ENCODE measurements at regions of chr14 and their contacts with region 1.

Region 1: GRCh38 chr14:64764641-64765520 is 60.7 kb downstream of the PLEKHG3 start:
- DNase-seq: peak; percentile 61 to 86
- H3K4me3 ChIP-seq: peak overlapping the region in 2 of 4 experiments; percentile 2 to 27; a peak in 2 of 8 replicates
- H3K27ac ChIP-seq: no peak overlapping the region
- H3K4me1 ChIP-seq: peaks cover 4 to 34% (median 24%) of the 10 kb centered on the region in 4 experiments
- H3K27me3 ChIP-seq: peaks cover 0 to 2% (median 0%) of the 10 kb centered on the region in 4 experiments; a peak in 3 of 7 replicates
- CTCF ChIP-seq: peak in 2 of 3 experiments; percentile 89 to 90; a peak in 3 of 4 replicates
- EP300 ChIP-seq: no peak
- POLR2A ChIP-seq: no peak
- RAD21 ChIP-seq: peak; percentile 82 to 84

Region 2: DNA sequence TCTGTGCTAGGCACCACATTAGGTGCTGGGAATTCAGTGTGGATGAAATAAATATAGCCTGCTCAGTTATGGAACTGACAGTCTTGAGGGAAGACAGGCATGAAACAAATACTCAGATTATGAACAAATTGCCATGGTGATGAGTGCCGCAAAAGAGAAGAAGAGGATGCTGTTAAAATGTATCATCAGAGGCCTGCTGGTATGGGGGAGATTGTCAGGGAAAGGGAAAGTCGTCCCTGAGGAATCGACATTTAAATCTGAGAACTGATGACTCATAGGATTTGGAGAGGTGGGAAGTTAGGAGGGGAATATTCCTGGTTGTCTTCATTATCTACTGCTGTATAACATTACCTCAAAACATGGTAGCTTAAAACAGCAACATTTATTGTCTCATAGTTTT is 173.1 kb before region 1 on chr14:
- CTCF ChIA-PET with region 1: no interaction called
- POLR2A ChIA-PET with region 1: no interaction called
- DNase-seq: no peak
- H3K4me3 ChIP-seq: no peak overlapping the region
- H3K27ac ChIP-seq: no peak overlapping the region
- H3K4me1 ChIP-seq: no peaks in the 10 kb centered on the region; a peak in 1 of 7 replicates
- H3K27me3 ChIP-seq: no peaks in the 10 kb centered on the region
- CTCF ChIP-seq: no peak
- EP300 ChIP-seq: no peak
- POLR2A ChIP-seq: no peak
- RAD21 ChIP-seq: no peak

Region 3: GRCh38 chr14:64720131-64720576 is 44.7 kb before region 1 on chr14:
- CTCF ChIA-PET with region 1: interaction called, 30 read pairs
- POLR2A ChIA-PET with region 1: interaction called, 5 read pairs
- DNase-seq: no peak
- H3K4me3 ChIP-seq: no peak overlapping the region
- H3K27ac ChIP-seq: no peak overlapping the region
- H3K4me1 ChIP-seq: peaks cover 55 to 77% (median 63%) of the 10 kb centered on the region in 4 experiments
- H3K27me3 ChIP-seq: 0 out of 7 replicates have a peak, but pooled peaks cover 0 to 3% (median 0%) of the 10 kb centered on the region in 4 experiments
- CTCF ChIP-seq: no peak
- EP300 ChIP-seq: no peak
- POLR2A ChIP-seq: no peak
- RAD21 ChIP-seq: no peak

Region 4: GRCh38 chr14:64726585-64726890 is 38.3 kb before region 1 on chr14:
- CTCF ChIA-PET with region 1: interaction called, 30 read pairs
- POLR2A ChIA-PET with region 1: interaction called, 3 read pairs
- DNase-seq: no peak
- H3K4me3 ChIP-seq: peak overlapping the region in 1 of 4 experiments; percentile 7; a peak in 1 of 8 replicates
- H3K27ac ChIP-seq: no peak overlapping the region
- H3K4me1 ChIP-seq: peaks cover 24 to 44% (median 38%) of the 10 kb centered on the region in 4 experiments
- H3K27me3 ChIP-seq: no peaks in the 10 kb centered on the region
- CTCF ChIP-seq: no peak
- EP300 ChIP-seq: no peak
- POLR2A ChIP-seq: no peak
- RAD21 ChIP-seq: no peak

Region 5: GRCh38 chr14:64736271-64737122 is 28.4 kb before region 1 on chr14:
- CTCF ChIA-PET with region 1: interaction called, 18 read pairs
- POLR2A ChIA-PET with region 1: no interaction called
- DNase-seq: peak in 1 of 2 experiments; percentile 62
- H3K4me3 ChIP-seq: no peak overlapping the region
- H3K27ac ChIP-seq: no peak overlapping the region
- H3K4me1 ChIP-seq: peaks cover 0 to 13% (median 6%) of the 10 kb centered on the region in 4 experiments; a peak in 6 of 7 replicates
- H3K27me3 ChIP-seq: no peaks in the 10 kb centered on the region
- CTCF ChIP-seq: peak; percentile 59 to 66 (median 63)
- EP300 ChIP-seq: no peak
- POLR2A ChIP-seq: no peak
- RAD21 ChIP-seq: peak; percentile 38 to 60; a peak in 3 of 4 replicates

Region 6: GRCh38 chr14:64745511-64746091 is 19.3 kb before region 1 on chr14:
- CTCF ChIA-PET with region 1: interaction called, 11 read pairs
- POLR2A ChIA-PET with region 1: interaction called, 3 read pairs
- DNase-seq: no peak
- H3K4me3 ChIP-seq: no peak overlapping the region
- H3K27ac ChIP-seq: no peak overlapping the region
- H3K4me1 ChIP-seq: no peaks in the 10 kb centered on the region
- H3K27me3 ChIP-seq: no peaks in the 10 kb centered on the region
- CTCF ChIP-seq: peak in 1 of 3 experiments; percentile 25; a peak in 1 of 4 replicates
- EP300 ChIP-seq: no peak
- POLR2A ChIP-seq: no peak
- RAD21 ChIP-seq: peak; percentile 32 to 49; a peak in 2 of 4 replicates

Region 7: DNA sequence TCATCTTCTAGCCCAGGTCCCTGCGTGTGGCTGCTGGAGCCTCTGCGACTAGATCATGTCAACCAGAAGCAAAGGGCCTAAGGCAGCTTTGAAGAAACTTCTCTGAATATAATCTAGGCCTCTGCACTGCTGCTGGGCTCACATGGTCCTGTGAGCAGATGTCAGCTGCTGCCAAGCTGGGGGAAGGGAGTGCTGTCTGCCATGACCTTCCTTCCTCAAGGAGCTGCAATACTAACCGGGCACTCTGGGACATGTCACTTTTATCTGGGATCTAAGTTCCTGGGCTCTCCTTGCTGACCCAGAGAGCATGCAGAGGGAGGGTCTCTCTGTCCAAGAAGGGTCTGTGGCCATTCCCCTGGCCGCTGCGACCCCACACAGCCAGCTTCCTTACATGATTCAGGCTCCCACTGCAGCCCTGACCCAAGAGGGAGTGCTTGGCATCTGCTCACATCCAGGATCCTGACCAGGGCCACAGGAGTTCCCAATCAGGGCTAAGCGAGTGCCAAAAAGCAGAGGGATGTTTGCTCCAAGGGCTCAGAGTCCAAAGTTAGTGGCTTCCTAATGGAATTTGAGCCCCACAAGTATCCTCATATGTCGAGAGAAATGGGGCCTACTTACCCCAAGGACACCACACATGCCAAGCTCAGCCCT is 13.3 kb after region 1 on chr14:
- CTCF ChIA-PET with region 1: interaction called, 40 read pairs
- POLR2A ChIA-PET with region 1: interaction called, 3 read pairs
- DNase-seq: no peak
- H3K4me3 ChIP-seq: no peak overlapping the region
- H3K27ac ChIP-seq: no peak overlapping the region
- H3K4me1 ChIP-seq: no peaks in the 10 kb centered on the region
- H3K27me3 ChIP-seq: no peaks in the 10 kb centered on the region
- CTCF ChIP-seq: no peak
- EP300 ChIP-seq: no peak
- POLR2A ChIP-seq: no peak
- RAD21 ChIP-seq: no peak